Heart left ventricle (tissue), 16 donors: ENCODE measurements at regions of chr19 and their contacts with region 1.

Region 1: GRCh38 chr19:10695401-10696398 is 5.5 kb upstream of the QTRT1 start:
- DNase-seq: peak; percentile 92 to 97 (median 96)
- ATAC-seq: peak; percentile 96 to 99 (median 98)
- H3K4me3 ChIP-seq: peak overlapping the region in 9 of 12 donors; percentile 21 to 47 (median 33)
- H3K27ac ChIP-seq: no peak overlapping the region
- H3K4me1 ChIP-seq: peaks cover 0 to 15% (median 9%) of the 10 kb centered on the region in 12 donors
- H3K27me3 ChIP-seq: no peaks in the 10 kb centered on the region
- CTCF ChIP-seq: no peak
- POLR2A ChIP-seq: no peak

Region 2: GRCh38 chr19:10106100-10106936 is 589.4 kb before region 1 on chr19 and contains the start of gene PPAN:
- intact Hi-C with region 1: loop called in 1 of 10 experiments (anchors 5 kb)
- DNase-seq: peak; percentile 98 to 99 (median 99)
- ATAC-seq: peak; percentile 98 to 100 (median 98)
- H3K4me3 ChIP-seq: peak within 1 kb of the TSS; percentile 56 to 96 (median 87)
- H3K27ac ChIP-seq: peak within 1 kb of the TSS; percentile 2 to 94 (median 79)
- H3K4me1 ChIP-seq: peaks cover 0 to 54% (median 13%) of the 10 kb centered on the region in 12 donors
- H3K27me3 ChIP-seq: no peaks in the 10 kb centered on the region
- CTCF ChIP-seq: no peak
- POLR2A ChIP-seq: peak in 1 of 2 donors; percentile 72
- total RNA-seq, gene PPAN: 16.3 to 24.9 (median 19.0) TPM

Region 3: GRCh38 chr19:10580979-10581631 is 114.6 kb before region 1 on chr19:
- intact Hi-C with region 1: loop called in 7 of 10 experiments (anchors 1 to 5 kb)
- DNase-seq: peak; percentile 83 to 89 (median 87)
- ATAC-seq: peak; percentile 76 to 93 (median 90)
- H3K4me3 ChIP-seq: peak overlapping the region in 4 of 12 donors; percentile 8 to 35 (median 12)
- H3K27ac ChIP-seq: no peak overlapping the region
- H3K4me1 ChIP-seq: peaks cover 0 to 6% (median 3%) of the 10 kb centered on the region in 12 donors
- H3K27me3 ChIP-seq: no peaks in the 10 kb centered on the region
- CTCF ChIP-seq: peak; percentile 94 to 99 (median 98)
- POLR2A ChIP-seq: no peak

Region 4: DNA sequence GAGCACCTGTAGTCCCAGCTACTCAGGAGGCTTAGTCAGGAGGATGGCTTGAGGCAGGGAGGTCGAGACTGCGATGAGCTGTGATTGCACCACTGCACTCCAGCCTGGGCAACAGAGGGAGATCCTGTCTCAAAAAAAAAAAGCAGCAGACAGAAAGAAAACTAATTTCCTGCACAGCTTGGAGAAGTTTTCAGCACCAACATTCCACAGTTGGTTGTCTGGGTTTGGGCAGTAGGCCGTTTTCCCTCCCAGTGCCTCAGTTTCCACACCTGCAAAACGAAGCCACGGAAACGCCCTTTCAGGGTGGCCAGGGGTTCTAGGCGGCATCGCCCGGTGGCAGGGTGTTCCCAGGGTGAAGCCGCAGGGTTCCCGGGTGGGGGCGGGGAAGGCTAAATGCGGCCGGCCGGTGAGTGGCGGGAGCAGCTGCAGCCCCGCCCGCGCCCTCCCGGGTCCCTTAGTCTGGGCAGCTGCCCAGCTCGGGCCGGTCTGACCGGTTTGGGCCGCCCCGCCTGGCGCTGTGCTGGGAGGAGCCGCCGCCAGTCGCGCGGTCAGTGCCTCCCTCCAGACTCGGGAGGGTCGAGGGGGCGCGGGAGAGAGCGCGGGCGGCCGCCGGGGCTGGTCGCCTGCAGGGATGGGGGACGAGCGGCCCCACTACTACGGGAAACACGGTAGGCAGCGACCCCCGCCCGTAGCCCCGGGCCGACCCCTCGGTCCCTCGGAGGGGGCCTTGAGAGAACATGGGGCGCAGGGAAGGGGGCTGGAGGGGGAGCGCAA is 70.5 kb before region 1 on chr19 and contains the start of gene SLC44A2:
- intact Hi-C with region 1: no loop called
- DNase-seq: peak; percentile 87 to 89 (median 89)
- ATAC-seq: peak; percentile 95 to 99 (median 98)
- H3K4me3 ChIP-seq: peak within 1 kb of the TSS; percentile 41 to 83 (median 65)
- H3K27ac ChIP-seq: peak within 1 kb of the TSS in 11 of 12 donors; percentile 63 to 94 (median 79)
- H3K4me1 ChIP-seq: peaks cover 0 to 30% (median 16%) of the 10 kb centered on the region in 12 donors
- H3K27me3 ChIP-seq: no peaks in the 10 kb centered on the region
- CTCF ChIP-seq: no peak
- POLR2A ChIP-seq: peak in 1 of 2 donors; percentile 48
- total RNA-seq, gene SLC44A2: 63.8 to 130 (median 91.9) TPM

Region 5: DNA sequence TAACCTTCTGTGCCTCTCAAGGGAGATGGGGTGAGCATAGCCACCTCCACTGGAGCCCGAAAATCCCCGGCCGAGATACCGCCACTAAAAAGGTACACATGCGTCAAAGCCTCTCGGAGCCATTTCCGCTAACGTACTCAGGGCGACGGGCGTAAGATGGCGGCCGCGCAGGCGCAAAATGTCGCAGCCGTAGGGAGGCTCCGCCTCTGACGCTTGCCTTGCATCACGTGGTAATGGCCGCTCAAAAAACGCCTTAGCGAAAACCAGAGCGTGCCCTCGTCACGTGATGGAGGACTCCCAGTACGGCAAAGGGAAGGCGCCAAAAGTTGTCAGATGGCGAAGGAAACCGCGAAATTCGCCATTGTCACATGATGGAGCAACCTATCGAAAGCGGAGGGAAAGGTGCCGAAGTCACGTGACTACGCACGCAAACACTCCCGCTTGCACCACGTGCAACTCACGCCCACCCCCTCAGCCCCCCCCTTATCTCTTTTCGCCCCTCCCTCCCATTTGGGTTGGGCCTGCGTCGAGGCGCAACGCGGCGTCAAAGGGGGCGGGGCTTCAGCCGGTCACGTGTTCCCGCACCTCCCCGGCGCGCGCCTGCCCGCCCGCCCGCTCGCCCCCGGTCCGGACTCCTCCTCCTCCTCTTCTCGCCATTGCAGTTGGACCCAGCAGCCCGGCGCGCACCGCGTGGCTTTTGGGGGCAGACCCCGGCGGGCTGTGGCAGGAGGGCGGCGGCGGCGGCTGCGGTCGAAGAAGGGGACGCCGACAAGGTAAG is 41.8 kb before region 1 on chr19 and contains the start of gene ILF3:
- intact Hi-C with region 1: loop called in 4 of 10 experiments (anchors 5 kb)
- DNase-seq: peak; percentile 99 to 100 (median 100)
- ATAC-seq: peak; percentile 90 to 95 (median 93)
- H3K4me3 ChIP-seq: peak within 1 kb of the TSS; percentile 75 to 100 (median 94)
- H3K27ac ChIP-seq: peak within 1 kb of the TSS; percentile 86 to 99 (median 98)
- H3K4me1 ChIP-seq: peaks cover 0 to 50% (median 36%) of the 10 kb centered on the region in 12 donors
- H3K27me3 ChIP-seq: no peaks in the 10 kb centered on the region
- CTCF ChIP-seq: no peak
- POLR2A ChIP-seq: peak in 1 of 2 donors; percentile 82
- total RNA-seq, gene ILF3: 45.7 to 140 (median 118) TPM

Region 6: DNA sequence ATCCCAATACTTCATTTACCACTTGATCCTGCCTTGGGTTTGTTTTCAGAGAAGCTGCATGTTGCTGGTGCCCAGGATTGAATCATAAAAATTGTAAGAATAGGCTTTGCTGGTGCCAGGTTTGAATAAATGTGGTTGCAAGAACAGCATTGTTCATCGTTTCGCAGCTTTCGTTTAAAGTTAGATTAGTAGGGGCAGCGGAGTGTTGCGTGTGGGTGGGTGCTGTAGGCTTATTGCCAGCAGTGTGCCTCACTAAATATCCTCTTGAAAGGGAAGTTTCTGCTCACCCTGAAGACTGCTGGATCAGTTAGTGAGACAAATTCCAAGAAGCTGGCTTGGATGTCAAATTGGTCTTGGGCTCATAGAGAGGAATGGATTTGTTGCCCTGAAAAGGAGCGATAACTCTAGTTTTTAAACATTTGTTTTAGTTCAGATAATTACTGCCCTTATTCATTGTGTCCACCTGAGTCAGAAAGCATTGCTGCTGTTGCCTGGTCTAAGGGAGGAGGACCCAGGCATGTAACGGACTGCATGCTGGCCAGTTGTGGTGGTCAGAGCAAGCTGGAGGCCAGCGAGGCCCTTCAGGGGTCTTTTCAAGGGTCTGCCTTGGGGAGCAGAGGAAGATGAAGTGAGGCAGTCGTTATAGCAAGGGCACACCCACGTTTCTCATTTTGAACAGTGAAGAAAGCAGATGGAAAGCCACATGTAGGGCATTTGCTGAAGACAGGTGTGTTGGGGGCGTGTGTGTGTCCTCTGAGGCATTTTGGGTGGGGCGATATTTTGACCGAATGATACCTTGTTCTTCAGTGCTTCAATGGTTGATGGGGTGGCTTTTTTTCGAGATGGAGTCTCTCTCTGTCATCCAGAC is 33.1 kb before region 1 on chr19:
- intact Hi-C with region 1: loop called in 4 of 10 experiments (anchors 5 kb)
- DNase-seq: peak in 1 of 5 donors; percentile 21
- ATAC-seq: peak in 1 of 4 donors; percentile 17
- H3K4me3 ChIP-seq: no peak overlapping the region
- H3K27ac ChIP-seq: peak overlapping the region in 1 of 12 donors; percentile 41
- H3K4me1 ChIP-seq: peaks cover 0 to 70% (median 43%) of the 10 kb centered on the region in 12 donors
- H3K27me3 ChIP-seq: no peaks in the 10 kb centered on the region
- CTCF ChIP-seq: no peak
- POLR2A ChIP-seq: no peak

Region 7: DNA sequence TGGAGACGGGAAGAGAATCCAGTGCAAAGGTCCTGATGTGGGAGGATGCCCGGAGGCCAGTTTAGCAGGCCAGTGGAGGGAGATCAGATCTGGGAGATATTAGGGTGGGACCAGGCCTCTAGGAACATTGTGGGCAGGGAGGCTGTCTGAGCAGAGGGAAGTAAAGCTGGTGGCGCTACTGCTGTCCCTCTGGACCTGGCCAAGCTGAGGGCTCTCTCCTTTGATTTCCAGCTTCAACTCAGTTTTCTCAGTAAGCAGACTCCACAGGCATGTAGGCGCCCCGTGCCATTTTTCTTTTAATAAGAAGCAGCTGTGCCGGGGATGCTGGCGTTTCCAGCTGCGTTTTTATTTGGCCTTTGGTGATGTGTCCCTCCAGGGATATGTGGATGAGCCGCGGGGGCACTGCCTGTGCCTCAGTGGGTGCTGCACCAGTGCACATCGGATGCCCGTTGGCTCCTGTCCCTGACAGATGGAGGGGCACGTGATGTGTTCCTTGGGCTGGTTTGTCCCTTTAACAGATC is 28.9 kb after region 1 on chr19:
- intact Hi-C with region 1: no loop called
- DNase-seq: no peak
- ATAC-seq: no peak
- H3K4me3 ChIP-seq: no peak overlapping the region
- H3K27ac ChIP-seq: peak overlapping the region in 7 of 12 donors; percentile 17 to 90 (median 78)
- H3K4me1 ChIP-seq: peaks cover 5 to 89% (median 60%) of the 10 kb centered on the region in 12 donors
- H3K27me3 ChIP-seq: no peaks in the 10 kb centered on the region
- CTCF ChIP-seq: no peak
- POLR2A ChIP-seq: no peak

Region 8: GRCh38 chr19:10864538-10864899 is 168.8 kb after region 1 on chr19:
- intact Hi-C with region 1: loop called in 1 of 10 experiments (anchors 5 kb)
- DNase-seq: peak; percentile 82 to 92 (median 84)
- ATAC-seq: peak; percentile 69 to 84 (median 82)
- H3K4me3 ChIP-seq: peak overlapping the region in 3 of 12 donors; percentile 13 to 25 (median 21)
- H3K27ac ChIP-seq: peak overlapping the region in 1 of 12 donors; percentile 23
- H3K4me1 ChIP-seq: peaks cover 0 to 37% (median 1%) of the 10 kb centered on the region in 12 donors
- H3K27me3 ChIP-seq: no peaks in the 10 kb centered on the region
- CTCF ChIP-seq: peak; percentile 77 to 95 (median 89)
- POLR2A ChIP-seq: no peak